Activated CD8-positive, alpha-beta T cell treated with anti-CD3 and anti-CD28 coated beads, Interleukin-2, amount 10 ng/mL, durations not matched to agents 7 days and 5 days (primary cell): ENCODE measurements at regions of chr9 and their contacts with region 1.

Region 1: DNA sequence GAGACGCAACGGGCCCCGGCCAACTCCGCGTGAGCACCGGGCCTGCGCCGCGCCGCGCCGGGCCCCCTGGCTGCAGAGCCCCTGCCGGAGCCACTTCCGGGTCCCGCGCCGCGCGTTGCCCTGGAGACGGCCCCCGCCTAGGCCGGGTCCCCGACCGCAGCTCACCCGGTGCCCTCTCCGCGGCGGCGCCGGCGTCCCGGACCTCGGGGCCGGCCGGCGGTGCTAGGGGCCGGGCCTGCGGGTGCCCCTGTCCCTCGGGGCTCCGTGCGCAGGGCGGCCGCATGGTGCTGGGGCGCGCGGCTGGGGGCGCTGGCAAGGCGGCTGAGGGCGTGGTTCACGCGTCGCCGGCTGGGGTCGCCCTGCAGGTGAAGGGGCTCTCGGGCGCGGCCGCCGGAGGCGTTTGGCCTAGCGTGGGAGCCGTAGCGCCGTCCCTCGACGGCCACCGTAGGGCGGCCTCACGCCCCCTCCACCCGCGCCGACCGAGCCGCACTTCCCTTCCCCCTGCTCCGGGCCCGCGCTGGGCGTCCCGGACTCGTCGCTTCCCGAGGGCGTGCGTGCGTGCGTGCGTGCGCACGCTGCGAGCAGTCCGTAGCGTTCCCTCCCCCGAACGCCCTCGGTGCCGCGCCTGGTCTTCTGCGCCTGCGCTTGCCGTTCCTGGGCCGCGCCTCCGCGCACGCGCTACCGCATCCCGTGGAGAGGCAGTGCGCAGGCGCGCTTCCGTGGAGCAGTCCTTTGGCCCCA is at the start of gene TMEM250:
- DNase-seq: peak; percentile 97
- ATAC-seq: peak; percentile 91
- H3K4me3 Mint-ChIP-seq: peak within 1 kb of the TSS; percentile 81
- H3K27ac Mint-ChIP-seq: peak within 1 kb of the TSS; percentile 81
- H3K4me1 Mint-ChIP-seq: peaks cover 30% of the 10 kb centered on the region
- H3K27me3 Mint-ChIP-seq: no peaks in the 10 kb centered on the region
- total RNA-seq, gene TMEM250: 56.5 to 57.0 TPM

Region 2: GRCh38 chr9:135969064-135969683 is 149.3 kb before region 1 on chr9:
- CTCF ChIA-PET with region 1: interaction called, 49 read pairs
- POLR2A ChIA-PET with region 1: interaction called, 3 read pairs
- DNase-seq: no peak
- ATAC-seq: no peak
- H3K4me3 Mint-ChIP-seq: no peak overlapping the region
- H3K27ac Mint-ChIP-seq: no peak overlapping the region
- H3K4me1 Mint-ChIP-seq: peaks cover 17% of the 10 kb centered on the region
- H3K27me3 Mint-ChIP-seq: no peaks in the 10 kb centered on the region

Region 3: DNA sequence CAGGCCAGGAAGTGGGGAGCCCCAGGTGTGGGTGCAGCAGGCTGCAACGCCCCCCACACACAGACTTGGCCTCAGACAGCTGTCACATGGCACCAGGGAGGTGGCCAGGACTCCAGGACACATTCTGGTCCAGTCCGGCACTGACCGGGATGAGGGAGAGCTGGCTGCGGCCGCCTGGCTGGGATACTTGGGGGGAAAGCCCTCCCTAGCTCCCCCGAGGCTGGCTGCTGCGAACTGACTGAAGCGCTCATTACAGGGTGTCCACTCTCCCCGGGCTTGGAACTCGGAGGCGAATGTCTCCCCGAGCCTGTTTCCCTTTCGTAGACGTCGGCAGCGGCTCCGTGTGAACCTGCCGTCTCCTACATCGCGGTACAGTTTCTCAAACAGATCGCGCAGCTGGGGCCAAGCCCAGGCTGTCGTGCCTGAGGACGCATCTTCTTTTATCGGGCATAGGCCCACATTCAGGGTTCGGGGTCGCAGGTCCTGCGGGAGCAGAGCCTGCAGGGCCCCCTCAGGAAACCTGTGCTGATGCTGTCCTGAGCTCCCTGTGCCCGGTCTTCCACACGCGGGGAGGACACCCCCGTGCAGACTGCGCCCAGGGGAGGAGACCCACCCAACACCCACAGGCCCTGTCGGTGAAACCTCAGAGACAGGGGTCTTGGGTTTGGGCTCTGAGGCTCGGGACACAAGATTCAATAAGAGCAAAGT is 43.2 kb before region 1 on chr9:
- CTCF ChIA-PET with region 1: no interaction called
- POLR2A ChIA-PET with region 1: no interaction called
- DNase-seq: no peak
- ATAC-seq: no peak
- H3K4me3 Mint-ChIP-seq: no peak overlapping the region
- H3K27ac Mint-ChIP-seq: no peak overlapping the region
- H3K4me1 Mint-ChIP-seq: peaks cover 12% of the 10 kb centered on the region
- H3K27me3 Mint-ChIP-seq: peaks cover 7% of the 10 kb centered on the region